Activated CD4-positive, alpha-beta memory T cell treated with anti-CD3 and anti-CD28 coated beads, Interleukin-2, amount 10 ng/mL, durations not matched to agents 7 days and 5 days (primary cell): ENCODE measurements at regions of chrX and their contacts with region 1.

Region 1: DNA sequence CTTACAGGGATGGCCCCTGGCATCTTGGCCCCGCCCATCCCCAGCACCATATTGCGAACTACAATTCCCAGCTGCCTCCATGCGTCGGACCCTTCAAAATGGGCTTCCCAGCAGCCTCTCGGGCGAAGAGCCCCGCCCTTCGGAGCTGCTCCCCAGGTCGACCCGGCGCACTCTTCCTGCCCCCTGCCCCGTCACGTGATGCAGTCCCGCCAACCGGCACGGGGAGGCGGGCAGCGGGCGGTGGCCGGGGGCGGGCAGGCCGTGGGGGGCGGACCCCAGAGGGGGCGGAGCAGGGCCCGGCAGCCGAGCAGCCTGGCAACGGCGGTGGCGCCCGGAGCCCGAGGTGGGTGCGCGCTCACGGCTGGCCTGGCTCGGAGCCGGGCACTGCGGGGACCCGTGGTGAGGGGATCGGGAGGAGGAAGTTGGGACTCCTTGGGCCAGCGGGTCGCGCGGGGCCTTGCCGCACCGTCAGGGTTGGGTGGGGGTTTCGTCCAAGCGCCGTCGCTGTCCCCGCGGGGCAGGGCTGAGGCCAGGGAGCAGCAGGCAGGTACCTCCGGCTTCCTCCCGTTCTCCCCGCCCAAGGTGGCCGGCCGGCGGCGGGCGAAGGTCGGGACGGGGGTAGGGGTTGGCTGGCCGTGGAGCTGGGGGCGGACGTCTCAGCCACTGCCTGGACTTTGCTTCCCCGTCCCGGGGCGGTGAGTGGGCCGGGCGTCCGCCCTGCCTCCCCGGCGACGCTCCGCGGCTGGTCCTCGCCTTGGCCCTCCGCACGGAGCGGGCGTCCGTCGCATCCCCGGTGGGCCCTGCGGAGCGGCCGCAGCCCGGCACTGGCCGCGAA is at the start of gene MTM1:
- DNase-seq: peak; percentile 92
- H3K4me3 Mint-ChIP-seq: peak within 1 kb of the TSS; percentile 85
- H3K27ac Mint-ChIP-seq: peak within 1 kb of the TSS; percentile 93
- H3K4me1 Mint-ChIP-seq: peaks cover 33% of the 10 kb centered on the region
- H3K27me3 Mint-ChIP-seq: no peaks in the 10 kb centered on the region
- total RNA-seq, gene MTM1: 36.3 to 36.5 TPM

Region 2: DNA sequence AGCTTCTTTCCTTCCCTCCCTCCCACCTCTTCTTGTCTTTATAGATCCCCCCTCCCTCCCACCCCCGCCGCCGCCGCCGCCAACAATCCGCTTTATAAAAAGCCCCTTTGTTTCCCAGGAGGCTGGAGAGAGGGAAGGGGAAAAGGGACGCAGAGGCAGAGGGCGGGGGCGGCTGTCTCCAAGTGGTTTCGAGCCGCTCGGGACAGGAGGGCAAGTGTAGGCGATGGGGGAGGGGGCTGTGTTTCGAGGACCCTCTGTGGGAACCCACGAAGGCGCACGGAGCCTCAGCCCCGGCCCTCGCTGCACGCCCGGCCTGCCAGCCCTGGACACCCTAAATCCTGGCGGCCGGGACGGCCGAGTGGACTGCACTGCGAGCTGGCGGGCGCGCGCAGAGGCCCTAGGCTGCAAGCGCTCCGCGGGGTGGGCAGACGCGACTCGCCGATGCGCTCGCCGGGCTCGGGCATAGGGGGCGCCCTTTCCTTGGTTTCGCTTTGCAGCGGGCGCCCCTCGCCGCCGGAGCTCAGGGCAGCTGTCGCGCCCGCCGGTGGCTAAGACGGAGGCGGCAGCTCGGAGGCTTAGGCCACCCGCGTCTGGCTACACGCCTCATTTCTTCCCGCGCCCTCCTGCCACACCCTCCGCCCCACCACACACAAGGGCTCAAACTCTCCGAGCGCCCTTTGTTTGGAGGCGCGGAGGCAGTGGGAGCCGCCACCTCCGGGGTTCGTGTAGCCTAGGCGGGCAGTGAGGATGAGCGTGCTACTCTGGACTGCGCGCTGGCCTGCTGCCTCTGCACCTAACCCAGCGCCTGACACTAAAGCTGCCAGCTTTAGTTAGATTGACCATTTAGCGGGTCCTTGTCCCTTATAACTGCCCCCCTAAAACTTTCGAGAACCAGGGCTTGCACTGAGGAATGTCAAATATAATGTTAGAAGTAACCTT is 203.2 kb before region 1 on chrX:
- CTCF ChIA-PET with region 1: interaction called, 4 read pairs
- POLR2A ChIA-PET with region 1: interaction called, 11 read pairs
- DNase-seq: peak; percentile 75
- H3K4me3 Mint-ChIP-seq: peak overlapping the region; percentile 79
- H3K27ac Mint-ChIP-seq: peak overlapping the region; percentile 47
- H3K4me1 Mint-ChIP-seq: peaks cover 24% of the 10 kb centered on the region
- H3K27me3 Mint-ChIP-seq: peaks cover 16% of the 10 kb centered on the region

Region 3: GRCh38 chrX:150478496-150479492 is 89.7 kb before region 1 on chrX:
- CTCF ChIA-PET with region 1: no interaction called
- POLR2A ChIA-PET with region 1: interaction called, 35 read pairs
- DNase-seq: peak; percentile 49
- H3K4me3 Mint-ChIP-seq: peak overlapping the region; percentile 70
- H3K27ac Mint-ChIP-seq: peak overlapping the region; percentile 95
- H3K4me1 Mint-ChIP-seq: peaks cover 69% of the 10 kb centered on the region
- H3K27me3 Mint-ChIP-seq: no peaks in the 10 kb centered on the region

Region 4: GRCh38 chrX:150517303-150517910 is 51.1 kb before region 1 on chrX:
- CTCF ChIA-PET with region 1: no interaction called
- POLR2A ChIA-PET with region 1: no interaction called
- DNase-seq: no peak
- H3K4me3 Mint-ChIP-seq: no peak overlapping the region
- H3K27ac Mint-ChIP-seq: no peak overlapping the region
- H3K4me1 Mint-ChIP-seq: no peaks in the 10 kb centered on the region
- H3K27me3 Mint-ChIP-seq: peaks cover 3% of the 10 kb centered on the region

Region 5: GRCh38 chrX:150547375-150548115 is 21.0 kb before region 1 on chrX:
- CTCF ChIA-PET with region 1: interaction called, 4 read pairs
- POLR2A ChIA-PET with region 1: interaction called, 43 read pairs
- DNase-seq: peak; percentile 19
- H3K4me3 Mint-ChIP-seq: peak overlapping the region; percentile 54
- H3K27ac Mint-ChIP-seq: peak overlapping the region; percentile 64
- H3K4me1 Mint-ChIP-seq: peaks cover 29% of the 10 kb centered on the region
- H3K27me3 Mint-ChIP-seq: no peaks in the 10 kb centered on the region